Breast epithelium (tissue), 4 donors: ENCODE measurements at regions of chr17 and their contacts with region 1.

Region 1: DNA sequence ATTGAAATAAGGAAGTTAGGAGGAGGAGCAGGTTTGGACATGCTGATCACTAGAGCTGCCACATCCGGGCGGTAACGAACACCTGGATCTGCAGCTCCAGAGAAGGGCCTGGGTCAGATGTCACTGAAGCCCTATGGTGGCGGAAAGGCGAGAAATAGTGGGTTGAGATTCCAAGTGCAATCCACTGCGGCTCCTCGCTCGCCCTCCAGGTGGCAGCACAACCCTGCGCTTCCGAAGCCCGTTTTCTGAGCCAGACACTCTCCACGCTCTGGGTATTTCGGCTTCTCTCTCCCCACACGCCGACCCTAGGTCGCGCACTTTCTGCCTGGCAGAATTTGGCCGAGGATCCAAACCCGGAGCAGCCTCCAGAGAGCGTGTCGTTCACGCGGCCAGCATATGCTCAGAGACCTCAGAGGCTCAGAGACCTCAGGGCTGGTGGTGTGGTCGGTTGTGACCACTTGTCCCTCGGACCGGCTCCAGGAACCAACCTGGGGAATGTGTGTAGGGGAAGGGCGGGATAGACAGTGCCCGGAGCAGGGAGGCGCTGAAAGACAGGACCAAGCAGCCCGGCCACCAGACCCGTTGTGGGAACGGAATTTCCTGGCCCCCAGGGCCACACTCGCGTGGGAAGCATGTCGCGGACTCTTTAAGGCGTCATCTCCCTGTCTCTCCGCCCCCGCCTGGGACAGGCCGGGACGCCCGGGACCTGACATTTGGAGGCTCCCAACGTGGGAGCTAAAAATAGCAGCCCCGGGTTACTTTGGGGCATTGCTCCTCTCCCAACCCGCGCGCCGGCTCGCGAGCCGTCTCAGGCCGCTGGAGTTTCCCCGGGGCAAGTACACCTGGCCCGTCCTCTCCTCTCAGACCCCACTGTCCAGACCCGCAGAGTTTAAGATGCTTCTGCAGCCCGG is 744 bp upstream of the SLC2A4 start:
- DNase-seq: peak; percentile 73 to 82
- H3K4me3 ChIP-seq: peak overlapping the region; percentile 42 to 67 (median 52)
- H3K27ac ChIP-seq: peak overlapping the region; percentile 80 to 88
- H3K4me1 ChIP-seq: peaks cover 5 to 11% of the 10 kb centered on the region in 2 donors
- H3K27me3 ChIP-seq: no peaks in the 10 kb centered on the region
- CTCF ChIP-seq: peak; percentile 94 to 97 (median 97)
- POLR2A ChIP-seq: no peak

Region 2: GRCh38 chr17:7204336-7204735 is 76.4 kb before region 1 on chr17:
- intact Hi-C with region 1: loop called (anchors 2 kb)
- DNase-seq: no peak
- H3K4me3 ChIP-seq: peak overlapping the region; percentile 45 to 71 (median 55)
- H3K27ac ChIP-seq: peak overlapping the region; percentile 68 to 81
- H3K4me1 ChIP-seq: no peaks in the 10 kb centered on the region
- H3K27me3 ChIP-seq: no peaks in the 10 kb centered on the region
- CTCF ChIP-seq: no peak
- POLR2A ChIP-seq: no peak

Region 3: GRCh38 chr17:7294614-7295153 is 13.9 kb after region 1 on chr17 and contains the start of gene YBX2:
- intact Hi-C with region 1: loop called (anchors 2 kb)
- DNase-seq: peak; percentile 77 to 83
- H3K4me3 ChIP-seq: peak within 1 kb of the TSS; percentile 0 to 58 (median 46)
- H3K27ac ChIP-seq: peak within 1 kb of the TSS; percentile 63 to 71
- H3K4me1 ChIP-seq: peaks cover 4% of the 10 kb centered on the region in 2 donors
- H3K27me3 ChIP-seq: no peaks in the 10 kb centered on the region
- CTCF ChIP-seq: no peak
- POLR2A ChIP-seq: no peak
- total RNA-seq, gene YBX2: 2.6 to 3.0 (median 2.9) TPM